ENCODE measurements at regions of chr6 and their contacts with region 1.

Region 1: GRCh38 chr6:152897799-152898399 is 84.9 kb downstream of the FBXO5 start:
- DNase-seq: peak; percentile 83
- ATAC-seq: peak; percentile 92
- H3K4me3 Mint-ChIP-seq: no peak overlapping the region
- H3K27ac Mint-ChIP-seq: no peak overlapping the region
- H3K4me1 Mint-ChIP-seq: no peaks in the 10 kb centered on the region
- H3K27me3 Mint-ChIP-seq: peaks cover 27% of the 10 kb centered on the region

Region 2: GRCh38 chr6:152484806-152485205 is 413.1 kb before region 1 on chr6:
- CTCF ChIA-PET with region 1: no interaction called
- POLR2A ChIA-PET with region 1: no interaction called
- intact Hi-C with region 1: loop called in 1 of 2 experiments (anchors 5 kb)
- DNase-seq: no peak
- ATAC-seq: no peak
- H3K4me3 Mint-ChIP-seq: no peak overlapping the region
- H3K27ac Mint-ChIP-seq: no peak overlapping the region
- H3K4me1 Mint-ChIP-seq: no peaks in the 10 kb centered on the region
- H3K27me3 Mint-ChIP-seq: no peaks in the 10 kb centered on the region

Region 3: DNA sequence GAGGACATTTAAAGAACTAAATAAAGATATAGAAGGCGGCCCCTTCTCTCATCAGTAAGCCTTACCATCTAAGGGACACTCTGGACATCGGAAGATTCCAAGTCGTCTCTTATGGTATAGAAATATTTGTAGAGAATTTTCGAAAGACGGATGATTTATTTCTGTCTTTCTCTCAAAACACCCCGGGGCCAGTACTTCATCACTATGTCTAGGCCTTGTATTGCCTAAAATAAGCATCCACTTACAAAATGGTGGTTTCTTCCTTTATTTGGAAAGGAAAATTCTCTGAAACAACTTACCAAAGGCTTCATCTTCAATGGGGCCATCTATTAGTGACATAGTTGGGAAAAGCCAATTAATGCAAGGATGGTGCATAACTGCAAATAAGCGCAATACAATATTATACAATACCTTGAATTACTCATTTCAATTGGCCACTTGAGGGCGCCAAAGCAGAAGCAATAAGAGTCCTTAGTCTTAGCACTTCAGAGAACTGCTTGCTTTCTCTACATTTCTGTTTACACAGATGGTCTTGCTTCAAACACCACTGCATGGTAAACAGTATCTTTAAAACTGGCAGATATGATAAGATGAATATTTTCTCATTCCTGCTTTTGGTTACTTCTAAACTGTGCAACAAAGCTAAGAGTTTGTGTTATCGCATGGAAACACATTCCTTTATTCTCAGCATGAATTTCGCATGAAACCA is 34.1 kb before region 1 on chr6:
- CTCF ChIA-PET with region 1: interaction called, 5 read pairs
- POLR2A ChIA-PET with region 1: no interaction called
- intact Hi-C with region 1: loop called in 1 of 2 experiments (anchors 2 kb)
- DNase-seq: peak; percentile 80
- ATAC-seq: peak; percentile 72
- H3K4me3 Mint-ChIP-seq: no peak overlapping the region
- H3K27ac Mint-ChIP-seq: no peak overlapping the region
- H3K4me1 Mint-ChIP-seq: no peaks in the 10 kb centered on the region
- H3K27me3 Mint-ChIP-seq: peaks cover 7% of the 10 kb centered on the region

Measured in activated CD4-positive, alpha-beta T cell treated with anti-CD3 and anti-CD28 coated beads for 36 hours (primary cell).